ENCODE measurements at regions of chr10 and their contacts with region 1.

Region 1: DNA sequence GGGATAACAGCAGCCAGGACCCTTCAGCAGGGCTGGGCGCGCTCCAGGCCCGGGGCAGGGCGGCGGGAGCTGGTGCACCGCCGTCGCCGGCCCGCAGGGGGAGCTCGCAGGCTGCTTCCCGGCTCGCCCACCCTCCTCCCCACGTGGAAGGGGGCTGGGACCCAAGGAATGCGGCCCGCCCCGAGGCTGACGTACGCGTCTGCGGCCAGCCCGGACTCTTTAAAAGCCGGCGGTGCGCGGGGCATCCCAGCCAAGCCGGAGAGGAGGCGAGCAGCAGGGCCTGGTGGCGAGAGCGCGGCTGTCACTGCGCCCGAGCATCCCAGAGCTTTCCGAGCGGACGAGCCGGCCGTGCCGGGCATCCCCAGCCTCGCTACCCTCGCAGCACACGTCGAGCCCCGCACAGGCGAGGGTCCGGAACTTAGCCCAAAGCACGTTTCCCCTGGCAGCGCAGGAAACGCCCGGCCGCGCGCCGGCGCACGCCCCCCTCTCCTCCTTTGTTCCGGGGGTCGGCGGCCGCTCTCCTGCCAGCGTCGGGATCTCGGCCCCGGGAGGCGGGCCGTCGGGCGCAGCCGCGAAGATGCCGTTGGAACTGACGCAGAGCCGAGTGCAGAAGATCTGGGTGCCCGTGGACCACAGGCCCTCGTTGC is at the start of gene PFKFB3:
- DNase-seq: peak; percentile 94
- H3K4me3 Mint-ChIP-seq: peak within 1 kb of the TSS; percentile 99
- H3K27ac Mint-ChIP-seq: peak within 1 kb of the TSS; percentile 83
- H3K4me1 Mint-ChIP-seq: peaks cover 36% of the 10 kb centered on the region
- H3K27me3 Mint-ChIP-seq: no peaks in the 10 kb centered on the region
- total RNA-seq, gene PFKFB3: 87.7 to 88.5 TPM

Region 2: GRCh38 chr10:6108603-6109443 is 94.0 kb before region 1 on chr10:
- CTCF ChIA-PET with region 1: interaction called, 9 read pairs
- intact Hi-C with region 1: loop called (anchors 1 kb)
- DNase-seq: peak; percentile 36
- H3K4me3 Mint-ChIP-seq: no peak overlapping the region
- H3K27ac Mint-ChIP-seq: peak overlapping the region; percentile 66
- H3K4me1 Mint-ChIP-seq: peaks cover 21% of the 10 kb centered on the region
- H3K27me3 Mint-ChIP-seq: no peaks in the 10 kb centered on the region

Region 3: GRCh38 chr10:6163364-6164270 is 39.2 kb before region 1 on chr10:
- CTCF ChIA-PET with region 1: interaction called, 9 read pairs
- intact Hi-C with region 1: loop called (anchors 2 kb)
- DNase-seq: peak; percentile 92
- H3K4me3 Mint-ChIP-seq: peak overlapping the region; percentile 98
- H3K27ac Mint-ChIP-seq: peak overlapping the region; percentile 94
- H3K4me1 Mint-ChIP-seq: peaks cover 57% of the 10 kb centered on the region
- H3K27me3 Mint-ChIP-seq: no peaks in the 10 kb centered on the region

Region 4: GRCh38 chr10:6275022-6275997 is 72.5 kb after region 1 on chr10:
- CTCF ChIA-PET with region 1: interaction called, 7 read pairs
- intact Hi-C with region 1: loop called (anchors 1 kb)
- DNase-seq: peak; percentile 98
- H3K4me3 Mint-ChIP-seq: peak overlapping the region; percentile 60
- H3K27ac Mint-ChIP-seq: peak overlapping the region; percentile 94
- H3K4me1 Mint-ChIP-seq: peaks cover 50% of the 10 kb centered on the region
- H3K27me3 Mint-ChIP-seq: no peaks in the 10 kb centered on the region

Region 5: DNA sequence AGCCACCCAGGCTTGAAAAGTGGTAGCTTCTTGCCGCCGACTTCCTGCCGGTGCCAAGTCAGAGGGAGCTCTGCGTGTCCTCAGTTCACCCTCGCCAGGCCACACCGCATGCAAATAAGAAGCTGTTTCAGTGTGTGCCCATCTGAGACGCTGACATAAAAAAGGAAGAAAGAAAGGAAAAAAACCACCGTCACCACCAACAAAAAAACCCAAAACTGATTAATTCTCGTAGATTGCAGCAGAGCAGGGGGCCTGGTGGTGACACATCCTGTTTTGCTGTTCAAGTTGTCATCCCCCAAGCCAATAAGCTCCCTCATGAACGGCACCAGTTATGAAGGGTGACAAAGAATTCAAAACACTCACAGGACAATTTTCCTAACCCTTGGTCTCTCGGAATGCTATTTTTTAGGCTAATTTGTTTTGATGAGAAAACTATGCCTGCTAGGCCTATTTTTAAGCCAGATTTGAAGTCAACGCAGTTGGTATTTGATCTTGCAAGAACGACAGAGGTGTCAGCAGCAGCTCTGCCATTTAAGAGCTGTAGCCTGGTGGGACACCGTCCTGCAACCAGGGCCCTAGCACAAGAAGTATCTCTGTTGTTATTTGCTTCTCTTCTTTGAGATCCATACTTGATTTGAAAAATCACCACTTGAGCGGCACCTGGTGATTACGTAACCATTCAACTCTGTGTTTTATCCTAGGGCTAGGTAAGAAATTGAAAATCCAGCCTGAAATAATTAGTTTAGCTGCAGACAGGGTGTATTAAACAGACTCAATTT is 145.5 kb after region 1 on chr10:
- CTCF ChIA-PET with region 1: interaction called, 19 read pairs
- intact Hi-C with region 1: loop called (anchors 1 kb)
- DNase-seq: peak; percentile 94
- H3K4me3 Mint-ChIP-seq: peak overlapping the region; percentile 63
- H3K27ac Mint-ChIP-seq: peak overlapping the region; percentile 96
- H3K4me1 Mint-ChIP-seq: peaks cover 58% of the 10 kb centered on the region
- H3K27me3 Mint-ChIP-seq: no peaks in the 10 kb centered on the region

Region 6: DNA sequence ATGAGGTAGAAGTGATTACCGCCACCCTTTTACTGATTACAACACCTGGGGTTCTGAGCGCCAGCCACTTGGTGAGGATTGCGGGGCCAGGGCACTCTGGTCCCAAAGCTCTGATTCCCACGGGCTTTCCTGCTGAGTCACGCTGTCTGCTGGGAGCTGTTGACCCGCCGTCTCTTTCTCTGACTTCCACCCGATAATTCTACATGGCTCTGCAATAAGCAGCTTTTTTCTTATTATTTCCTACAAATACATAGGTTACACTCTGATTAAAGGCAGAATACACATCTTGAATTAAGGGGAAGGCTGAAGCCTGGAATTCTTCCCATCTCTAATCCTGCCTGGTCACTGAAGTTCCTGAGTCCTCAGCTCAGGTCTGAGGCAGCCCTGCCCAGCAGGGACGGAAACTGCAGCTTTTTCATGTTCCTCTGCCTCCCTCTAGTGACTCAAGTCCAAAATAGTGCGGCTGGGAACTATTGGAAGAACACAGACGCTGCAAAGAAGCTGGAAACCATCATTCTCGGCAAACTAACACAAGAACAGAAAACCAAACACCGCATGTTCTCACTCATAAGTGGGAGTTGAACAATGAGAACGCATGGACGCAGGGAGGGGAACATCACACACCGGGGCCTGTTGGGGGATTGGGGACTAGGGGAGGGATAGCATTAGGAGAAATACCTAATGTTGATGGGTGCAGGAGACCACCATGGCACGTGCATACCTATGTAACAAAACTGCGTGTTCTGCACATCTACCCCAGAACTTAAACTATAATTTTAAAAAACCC is 198.9 kb after region 1 on chr10:
- CTCF ChIA-PET with region 1: interaction called, 66 read pairs
- intact Hi-C with region 1: loop called (anchors 1 kb)
- DNase-seq: peak; percentile 75
- H3K4me3 Mint-ChIP-seq: no peak overlapping the region
- H3K27ac Mint-ChIP-seq: no peak overlapping the region
- H3K4me1 Mint-ChIP-seq: peaks cover 14% of the 10 kb centered on the region
- H3K27me3 Mint-ChIP-seq: peaks cover 2% of the 10 kb centered on the region

Region 7: DNA sequence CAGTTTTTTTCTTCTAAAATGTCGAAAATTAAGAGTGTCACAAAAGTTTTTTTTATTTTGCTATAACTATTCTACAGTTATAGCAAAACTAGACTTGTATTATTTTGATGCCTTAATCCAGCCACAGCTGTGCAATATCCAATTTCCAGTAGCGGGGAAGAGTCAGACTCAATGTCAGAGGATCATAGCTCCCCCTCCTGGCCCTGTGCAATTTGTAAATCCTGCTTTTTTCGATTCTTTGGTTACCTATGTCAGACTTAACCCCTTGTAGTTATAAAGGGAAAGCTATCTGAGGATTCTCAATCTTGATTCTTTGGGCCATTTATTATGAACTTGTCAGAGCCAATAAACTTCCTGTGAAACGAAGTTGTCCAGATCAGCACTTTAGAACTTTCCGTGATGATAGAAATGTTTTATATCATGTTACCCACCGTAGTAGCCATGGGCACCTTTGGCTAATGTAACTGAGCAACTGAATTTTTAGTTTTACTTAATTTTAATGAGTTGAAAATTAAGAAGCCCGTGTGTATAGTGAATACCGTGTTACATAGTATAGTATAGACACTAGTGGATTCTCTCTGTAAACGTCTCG is 465.0 kb after region 1 on chr10:
- CTCF ChIA-PET with region 1: no interaction called
- intact Hi-C with region 1: loop called (anchors 5 kb)
- DNase-seq: peak; percentile 77
- H3K4me3 Mint-ChIP-seq: no peak overlapping the region
- H3K27ac Mint-ChIP-seq: no peak overlapping the region
- H3K4me1 Mint-ChIP-seq: peaks cover 14% of the 10 kb centered on the region
- H3K27me3 Mint-ChIP-seq: no peaks in the 10 kb centered on the region

Region 8: DNA sequence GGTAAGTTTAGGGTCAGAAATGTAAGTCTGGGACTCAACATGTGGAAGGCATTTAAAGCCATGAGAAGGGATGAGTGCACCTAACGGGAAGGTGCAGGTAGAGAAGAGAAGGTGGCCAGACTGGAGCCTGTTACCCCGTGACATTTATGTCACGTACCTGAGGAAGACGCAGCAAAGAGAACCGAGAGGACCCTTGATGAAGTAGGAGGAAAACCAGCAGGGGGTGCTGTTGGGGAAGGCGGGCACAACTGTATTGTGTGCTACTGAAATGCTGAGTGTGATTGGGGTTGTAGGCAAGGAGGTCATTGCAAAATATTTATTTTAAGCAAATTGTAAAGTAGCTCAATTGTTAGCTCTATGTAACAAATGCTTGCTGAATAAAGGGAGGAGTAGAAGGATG is 715.5 kb after region 1 on chr10:
- CTCF ChIA-PET with region 1: no interaction called
- intact Hi-C with region 1: no loop called
- DNase-seq: peak; percentile 87
- H3K4me3 Mint-ChIP-seq: no peak overlapping the region
- H3K27ac Mint-ChIP-seq: no peak overlapping the region
- H3K4me1 Mint-ChIP-seq: peaks cover 6% of the 10 kb centered on the region
- H3K27me3 Mint-ChIP-seq: no peaks in the 10 kb centered on the region

Measured in activated naive CD4-positive, alpha-beta T cell treated with anti-CD3 and anti-CD28 coated beads for 36 hours (primary cell).